ENCODE measurements at regions of chr20 and their contacts with region 1.

Region 1: DNA sequence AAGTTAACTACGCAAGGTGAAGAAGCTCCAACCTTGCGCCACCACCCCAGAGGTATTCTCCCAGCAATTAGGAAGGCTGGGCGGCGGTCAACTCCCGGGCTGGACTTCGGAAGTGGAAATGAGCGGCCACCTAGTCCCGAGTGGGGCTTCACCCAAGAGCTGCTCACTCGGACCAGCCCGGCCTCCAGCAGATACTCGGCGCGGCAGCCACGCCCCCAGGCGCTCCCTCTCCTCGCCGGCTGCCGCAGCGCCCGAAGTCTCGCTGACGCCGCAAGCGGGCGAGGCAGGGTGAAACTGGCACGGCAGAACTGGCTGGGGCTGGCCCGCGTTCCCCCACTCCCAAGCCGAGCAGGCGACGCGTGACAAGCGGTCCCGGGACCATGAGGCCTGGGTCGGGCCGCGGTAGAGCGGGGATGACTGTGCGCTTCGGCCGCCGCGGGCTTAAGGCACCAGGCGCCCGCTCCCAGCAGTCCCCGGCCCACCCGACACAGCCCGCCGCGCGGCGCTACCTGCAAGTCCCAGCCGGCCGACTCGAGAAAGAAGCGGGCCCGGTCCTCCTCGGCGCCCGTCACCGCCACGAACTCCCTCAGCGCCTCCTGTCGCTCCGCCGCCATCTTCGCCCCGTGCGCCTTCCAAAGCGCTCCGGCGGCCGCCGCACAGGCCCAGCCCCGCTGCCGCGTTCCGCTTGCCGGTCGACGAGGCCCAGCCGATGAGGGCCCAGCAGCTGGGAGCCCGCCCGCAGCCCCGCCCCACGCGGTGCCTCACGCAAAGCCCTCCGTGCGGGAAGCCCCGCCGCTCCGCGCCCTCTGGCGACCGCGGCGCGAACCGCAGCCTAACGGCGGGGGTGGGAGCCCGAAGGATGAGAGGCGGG is at the start of gene NSFL1C:
- DNase-seq: peak; percentile 97 to 98
- ATAC-seq: peak; percentile 97 to 98 (median 98)
- H3K4me3 ChIP-seq: peak within 1 kb of the TSS; percentile 80
- H3K27ac ChIP-seq: peak within 1 kb of the TSS; percentile 90
- H3K4me1 ChIP-seq: peaks cover 27% of the 10 kb centered on the region
- H3K27me3 ChIP-seq: no peaks in the 10 kb centered on the region
- CTCF ChIP-seq: peak; percentile 99
- total RNA-seq, gene NSFL1C: 99.9 to 135 (median 118) TPM

Region 2: DNA sequence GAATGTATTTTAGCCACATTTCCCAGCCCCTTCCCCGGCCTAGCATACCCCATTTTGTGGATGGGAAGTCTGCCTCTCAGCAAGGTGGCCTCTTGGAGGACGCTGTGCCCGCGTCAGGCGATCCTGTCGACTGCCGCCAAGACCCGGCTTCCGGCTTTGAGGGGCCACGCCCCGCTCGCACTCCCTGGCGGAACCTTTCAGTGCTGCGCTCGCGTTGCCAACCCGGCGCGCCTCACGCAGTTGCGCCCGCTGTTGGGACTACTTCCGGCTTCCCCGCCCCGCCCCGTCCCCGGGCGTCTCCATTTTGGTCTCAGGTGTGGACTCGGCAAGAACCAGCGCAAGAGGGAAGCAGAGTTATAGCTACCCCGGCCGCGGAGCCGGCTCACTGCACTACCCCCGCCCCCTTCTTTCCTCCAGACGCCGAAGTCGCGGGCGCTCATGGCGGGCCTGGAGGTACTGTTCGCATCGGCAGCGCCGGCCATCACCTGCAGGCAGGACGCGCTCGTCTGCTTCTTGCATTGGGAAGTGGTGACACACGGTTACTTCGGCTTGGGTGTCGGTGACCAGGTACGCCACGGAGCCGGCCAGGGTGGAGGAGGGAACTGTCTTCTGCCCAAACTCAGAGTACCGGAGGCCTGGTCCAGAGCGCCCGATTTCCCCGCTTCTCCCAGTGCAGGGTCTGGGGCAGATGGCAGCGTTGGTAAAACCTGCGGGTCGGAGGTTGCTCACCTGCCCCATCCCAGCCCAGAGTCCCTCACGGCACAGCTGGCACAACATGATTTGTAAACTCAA is 347.9 kb before region 1 on chr20 and contains the start of gene PSMF1:
- intact Hi-C with region 1: loop called (anchors 5 to 10 kb)
- DNase-seq: peak; percentile 96 to 97
- ATAC-seq: peak; percentile 98 to 99 (median 98)
- H3K4me3 ChIP-seq: peak within 1 kb of the TSS; percentile 98
- H3K27ac ChIP-seq: peak within 1 kb of the TSS; percentile 85
- H3K4me1 ChIP-seq: peaks cover 50% of the 10 kb centered on the region
- H3K27me3 ChIP-seq: no peaks in the 10 kb centered on the region
- CTCF ChIP-seq: peak; percentile 14
- total RNA-seq, gene PSMF1: 137 to 159 (median 144) TPM

Region 3: DNA sequence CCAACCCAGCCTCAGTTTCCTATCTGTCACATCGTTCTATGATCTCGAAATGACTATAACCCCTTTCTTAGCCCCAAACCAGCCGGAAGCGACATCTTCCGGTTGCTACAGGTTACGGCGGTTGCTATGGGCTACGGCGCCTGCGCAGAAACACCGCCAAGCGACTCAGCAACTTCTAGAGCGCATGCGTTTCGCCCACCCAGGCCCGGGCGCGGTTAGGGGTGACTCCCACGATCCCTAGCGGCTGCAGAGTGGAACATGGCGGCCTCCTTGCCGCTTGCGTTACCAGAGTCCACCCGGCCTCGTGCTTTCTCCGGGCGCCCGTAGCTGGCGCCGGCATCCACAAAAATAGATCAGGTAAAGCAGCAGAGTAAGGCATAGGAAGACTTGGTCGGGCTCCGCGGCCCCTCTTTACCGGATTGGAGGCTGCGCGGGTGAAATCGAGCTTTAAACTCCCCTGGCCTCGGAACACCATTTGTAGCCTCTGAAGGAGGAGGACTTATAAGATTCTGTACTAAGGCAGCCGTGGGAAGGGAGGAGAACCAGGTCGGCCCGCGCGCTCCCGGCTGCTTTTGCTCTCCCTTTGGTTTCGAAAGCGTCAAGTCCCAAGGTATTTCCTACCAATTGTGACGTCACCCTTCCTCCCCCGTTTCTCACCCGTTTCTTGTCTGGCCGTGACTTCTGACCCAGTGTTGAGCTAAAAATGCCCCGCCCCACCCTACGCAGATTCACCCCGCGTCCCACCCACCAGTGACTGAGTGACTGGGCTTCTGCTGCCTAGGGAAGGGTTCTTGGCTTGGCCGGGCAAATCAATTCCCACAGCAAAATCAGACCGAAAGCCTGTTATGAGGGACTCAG is 141.0 kb before region 1 on chr20:
- intact Hi-C with region 1: loop called in 1 of 2 experiments (anchors 5 kb)
- DNase-seq: peak; percentile 98 to 99
- ATAC-seq: peak; percentile 86 to 90 (median 90)
- H3K4me3 ChIP-seq: peak overlapping the region; percentile 72
- H3K27ac ChIP-seq: peak overlapping the region; percentile 93
- H3K4me1 ChIP-seq: peaks cover 71% of the 10 kb centered on the region
- H3K27me3 ChIP-seq: no peaks in the 10 kb centered on the region
- CTCF ChIP-seq: no peak

Region 4: GRCh38 chr20:1478576-1478975 is 12.1 kb after region 1 on chr20:
- intact Hi-C with region 1: no loop called
- DNase-seq: no peak
- ATAC-seq: no peak
- H3K4me3 ChIP-seq: no peak overlapping the region
- H3K27ac ChIP-seq: no peak overlapping the region
- H3K4me1 ChIP-seq: no peaks in the 10 kb centered on the region
- H3K27me3 ChIP-seq: peaks cover 0 to 12% (median 0%) of the 10 kb centered on the region in 3 donors
- CTCF ChIP-seq: no peak

Measured in psoas muscle (tissue), 8 donors.